H1 (cell line): ENCODE measurements at regions of chr13 and their contacts with region 1.

Region 1: GRCh38 chr13:94435604-94436226 is 43.8 kb downstream of the DCT start:
- DNase-seq: no peak
- H3K4me3 ChIP-seq: no peak overlapping the region
- H3K27ac ChIP-seq: no peak overlapping the region
- H3K4me1 ChIP-seq: peaks cover 0 to 3% (median under 1%) of the 10 kb centered on the region in 4 experiments; a peak in 2 of 7 replicates
- H3K27me3 ChIP-seq: no peaks in the 10 kb centered on the region; a peak in 1 of 7 replicates
- CTCF ChIP-seq: peak in 2 of 3 experiments; percentile 39 to 43; a peak in 2 of 4 replicates
- EP300 ChIP-seq: no peak
- POLR2A ChIP-seq: no peak
- RAD21 ChIP-seq: peak; percentile 78 to 82

Region 2: GRCh38 chr13:94454906-94455305 is 19.2 kb after region 1 on chr13:
- CTCF ChIA-PET with region 1: interaction called, 19 read pairs
- POLR2A ChIA-PET with region 1: no interaction called
- DNase-seq: no peak
- H3K4me3 ChIP-seq: no peak overlapping the region
- H3K27ac ChIP-seq: no peak overlapping the region
- H3K4me1 ChIP-seq: no peaks in the 10 kb centered on the region
- H3K27me3 ChIP-seq: no peaks in the 10 kb centered on the region
- CTCF ChIP-seq: no peak
- EP300 ChIP-seq: no peak
- POLR2A ChIP-seq: no peak
- RAD21 ChIP-seq: no peak

Region 3: GRCh38 chr13:94549232-94550061 is 113.7 kb after region 1 on chr13:
- CTCF ChIA-PET with region 1: interaction called, 24 read pairs
- POLR2A ChIA-PET with region 1: interaction called, 6 read pairs
- DNase-seq: peak; percentile 76 to 95
- H3K4me3 ChIP-seq: peak overlapping the region; percentile 72 to 87 (median 84)
- H3K27ac ChIP-seq: peak overlapping the region; percentile 78
- H3K4me1 ChIP-seq: peaks cover 3 to 16% (median 14%) of the 10 kb centered on the region in 4 experiments; a peak in 4 of 7 replicates
- H3K27me3 ChIP-seq: no peaks in the 10 kb centered on the region; a peak in 2 of 7 replicates
- CTCF ChIP-seq: no peak
- EP300 ChIP-seq: no peak; a peak in 1 of 3 replicates
- POLR2A ChIP-seq: peak; percentile 56 to 70
- RAD21 ChIP-seq: no peak